Caco-2 (cell line): ENCODE measurements at regions of chr2 and their contacts with region 1.

Region 1: DNA sequence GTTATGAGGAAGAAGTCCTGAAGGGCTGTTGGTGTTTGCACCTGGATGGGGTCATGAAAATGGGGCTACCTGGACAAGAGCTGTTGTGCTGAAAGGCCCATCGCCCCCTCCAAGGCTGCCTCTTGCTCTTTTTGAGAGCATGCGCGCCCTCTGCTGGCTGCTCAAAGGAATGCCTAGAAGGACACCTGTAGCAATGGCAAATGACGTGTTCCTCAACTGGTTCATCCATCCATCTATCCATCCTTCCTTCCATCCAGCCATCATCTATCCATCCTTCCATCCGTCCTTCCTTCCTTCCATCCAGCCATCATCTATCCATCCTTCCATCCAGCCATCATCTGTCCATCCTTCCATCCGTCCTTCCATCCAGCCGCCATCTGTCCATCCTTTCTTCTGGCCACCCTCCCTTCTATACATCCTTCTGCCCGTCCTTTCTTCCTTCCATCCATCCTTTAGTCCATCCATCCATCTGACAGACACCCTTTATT is 17.2 kb upstream of the RPL31 start:
- DNase-seq: peak; percentile 80 to 82
- H3K4me3 ChIP-seq: no peak overlapping the region
- H3K4me3 Mint-ChIP-seq: no peak overlapping the region
- H3K27ac Mint-ChIP-seq: no peak overlapping the region
- H3K4me1 ChIP-seq: peaks cover 16% of the 10 kb centered on the region
- H3K4me1 Mint-ChIP-seq: peaks cover 8% of the 10 kb centered on the region
- H3K27me3 ChIP-seq: no peaks in the 10 kb centered on the region
- H3K27me3 Mint-ChIP-seq: no peaks in the 10 kb centered on the region
- CTCF ChIP-seq: peak; percentile 95 to 96

Region 2: DNA sequence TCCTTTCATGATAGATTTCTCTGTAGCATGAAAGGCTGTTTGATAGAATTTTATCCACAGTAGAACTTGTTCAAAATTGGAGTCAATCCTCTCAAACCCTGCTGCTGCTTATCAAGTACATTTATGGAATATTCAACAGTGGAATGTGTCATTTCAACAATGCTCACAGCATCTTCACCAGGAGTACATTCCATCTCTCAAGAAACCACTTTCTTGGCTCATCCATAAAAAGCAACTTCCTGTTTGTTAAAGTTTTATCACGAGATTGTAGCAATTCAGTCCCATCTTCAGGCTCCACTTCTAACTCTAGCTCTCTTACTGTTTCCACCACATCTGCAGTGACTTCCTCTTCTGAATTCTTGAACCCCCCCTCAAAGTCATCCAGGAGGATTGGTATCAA is 392.7 kb before region 1 on chr2:
- CTCF ChIA-PET with region 1: interaction called, 3 read pairs
- POLR2A ChIA-PET with region 1: no interaction called
- intact Hi-C with region 1: loop called (anchors 1 kb)
- DNase-seq: no peak
- H3K4me3 ChIP-seq: no peak overlapping the region
- H3K4me3 Mint-ChIP-seq: no peak overlapping the region
- H3K27ac Mint-ChIP-seq: no peak overlapping the region
- H3K4me1 ChIP-seq: no peaks in the 10 kb centered on the region
- H3K4me1 Mint-ChIP-seq: no peaks in the 10 kb centered on the region
- H3K27me3 ChIP-seq: no peaks in the 10 kb centered on the region
- H3K27me3 Mint-ChIP-seq: peaks cover 8% of the 10 kb centered on the region
- CTCF ChIP-seq: no peak

Region 3: DNA sequence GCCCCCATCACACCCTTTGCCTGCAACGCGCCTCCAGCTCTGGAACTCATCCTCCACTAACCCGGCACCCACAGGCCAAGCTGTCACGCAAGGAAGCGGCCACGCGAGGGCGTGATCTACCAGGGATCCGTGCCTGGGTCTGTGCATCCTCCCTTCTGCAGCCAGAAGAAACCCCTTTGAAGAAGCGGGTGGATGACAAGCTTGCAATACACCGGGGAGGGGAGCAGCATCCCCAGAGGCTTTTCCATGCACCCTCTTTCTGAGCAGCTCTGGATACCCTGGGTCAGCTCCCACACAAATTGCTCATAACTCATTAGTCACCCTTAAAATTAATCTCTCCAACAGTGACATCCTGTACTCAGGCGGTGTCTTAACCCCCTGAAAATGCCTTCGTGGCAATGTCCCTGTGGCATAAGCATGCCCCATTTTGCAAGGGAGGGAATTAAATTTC is 374.5 kb before region 1 on chr2:
- CTCF ChIA-PET with region 1: interaction called, 4 read pairs
- POLR2A ChIA-PET with region 1: no interaction called
- intact Hi-C with region 1: loop called (anchors 1 kb)
- DNase-seq: peak; percentile 74 to 79
- H3K4me3 ChIP-seq: no peak overlapping the region
- H3K4me3 Mint-ChIP-seq: no peak overlapping the region
- H3K27ac Mint-ChIP-seq: no peak overlapping the region
- H3K4me1 ChIP-seq: no peaks in the 10 kb centered on the region
- H3K4me1 Mint-ChIP-seq: no peaks in the 10 kb centered on the region
- H3K27me3 ChIP-seq: no peaks in the 10 kb centered on the region
- H3K27me3 Mint-ChIP-seq: peaks cover 12% of the 10 kb centered on the region
- CTCF ChIP-seq: peak; percentile 71 to 74

Region 4: DNA sequence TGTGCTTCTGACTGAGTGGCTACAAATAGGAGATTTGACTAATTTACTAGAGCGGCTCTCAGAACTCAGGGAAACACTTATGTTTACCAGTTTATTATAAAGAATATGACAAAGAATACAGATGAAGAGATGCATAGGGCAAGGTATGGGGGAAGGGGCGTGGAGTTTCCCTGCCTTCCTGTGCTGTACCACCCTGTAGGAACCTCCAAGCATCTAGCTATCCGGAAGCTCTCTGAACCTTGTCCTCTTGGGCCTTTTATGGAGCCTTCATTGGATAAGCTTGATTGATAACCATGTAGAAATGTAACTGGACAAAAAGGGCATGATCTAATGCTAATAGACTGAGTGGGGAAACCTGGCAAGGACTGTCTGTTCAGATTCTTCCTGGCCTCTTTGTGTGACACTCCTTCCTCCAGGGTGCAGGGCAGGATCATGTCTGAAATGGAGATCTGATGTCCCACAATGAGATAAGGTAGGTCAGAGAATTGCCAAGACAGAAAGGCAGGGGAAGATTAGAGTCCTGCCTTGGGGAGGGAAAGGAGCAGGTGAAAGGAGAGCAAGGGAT is 266.8 kb before region 1 on chr2:
- CTCF ChIA-PET with region 1: no interaction called
- POLR2A ChIA-PET with region 1: no interaction called
- intact Hi-C with region 1: loop called (anchors 5 kb)
- DNase-seq: peak; percentile 14 to 49
- H3K4me3 ChIP-seq: no peak overlapping the region
- H3K4me3 Mint-ChIP-seq: no peak overlapping the region
- H3K27ac Mint-ChIP-seq: no peak overlapping the region
- H3K4me1 ChIP-seq: peaks cover 7% of the 10 kb centered on the region; the same call in 1 of the 2 replicates
- H3K4me1 Mint-ChIP-seq: no peaks in the 10 kb centered on the region
- H3K27me3 ChIP-seq: no peaks in the 10 kb centered on the region
- H3K27me3 Mint-ChIP-seq: peaks cover 5% of the 10 kb centered on the region
- CTCF ChIP-seq: no peak

Region 5: DNA sequence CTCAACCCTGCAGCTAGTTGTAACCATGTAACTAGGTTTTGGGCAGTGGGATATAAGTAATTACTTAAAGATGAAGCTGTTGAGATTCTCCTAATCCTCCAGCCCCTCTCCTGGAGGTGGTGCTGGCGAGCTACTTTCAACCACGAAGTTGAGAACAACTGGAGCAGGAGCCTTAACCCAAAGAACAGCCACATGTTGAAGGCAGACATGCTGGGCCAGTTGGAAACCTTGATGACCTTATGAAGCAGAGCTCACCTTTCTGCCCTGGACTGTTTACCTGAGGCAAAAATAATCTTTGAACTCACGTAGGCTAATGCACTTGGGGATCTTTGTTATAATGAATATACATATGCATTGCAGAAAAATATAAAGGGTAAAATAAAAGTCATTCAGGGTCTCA is 254.6 kb before region 1 on chr2:
- CTCF ChIA-PET with region 1: interaction called, 3 read pairs
- POLR2A ChIA-PET with region 1: no interaction called
- intact Hi-C with region 1: loop called (anchors 1 kb)
- DNase-seq: peak; percentile 49 to 55
- H3K4me3 ChIP-seq: no peak overlapping the region
- H3K4me3 Mint-ChIP-seq: no peak overlapping the region
- H3K27ac Mint-ChIP-seq: no peak overlapping the region
- H3K4me1 ChIP-seq: no peaks in the 10 kb centered on the region
- H3K4me1 Mint-ChIP-seq: no peaks in the 10 kb centered on the region
- H3K27me3 ChIP-seq: no peaks in the 10 kb centered on the region
- H3K27me3 Mint-ChIP-seq: peaks cover 14% of the 10 kb centered on the region
- CTCF ChIP-seq: peak; percentile 27 to 37

Region 6: DNA sequence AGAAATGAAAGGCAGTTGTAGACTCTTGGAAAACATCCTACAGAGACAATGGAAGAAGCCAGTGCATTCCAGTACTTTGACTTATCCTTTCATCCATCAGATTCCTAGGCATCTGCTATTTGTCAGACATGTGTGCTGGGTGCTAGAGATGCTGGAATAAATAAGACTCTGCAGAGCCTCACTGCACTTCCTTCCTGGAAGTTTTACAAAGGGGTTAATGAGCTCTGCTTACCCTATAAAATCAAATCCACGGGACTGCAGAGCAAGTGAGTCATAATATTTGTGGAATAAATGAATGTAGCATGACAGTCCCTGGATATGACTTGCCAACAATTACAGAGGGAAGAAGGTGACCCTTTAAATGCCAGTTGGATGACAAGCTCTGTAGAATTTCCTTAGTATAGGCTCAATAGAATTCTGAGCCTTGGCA is 217.7 kb before region 1 on chr2:
- CTCF ChIA-PET with region 1: no interaction called
- POLR2A ChIA-PET with region 1: no interaction called
- intact Hi-C with region 1: no loop called
- DNase-seq: no peak
- H3K4me3 ChIP-seq: no peak overlapping the region
- H3K4me3 Mint-ChIP-seq: no peak overlapping the region
- H3K27ac Mint-ChIP-seq: no peak overlapping the region
- H3K4me1 ChIP-seq: no peaks in the 10 kb centered on the region
- H3K4me1 Mint-ChIP-seq: no peaks in the 10 kb centered on the region
- H3K27me3 ChIP-seq: no peaks in the 10 kb centered on the region; the same call in 1 of the 2 replicates
- H3K27me3 Mint-ChIP-seq: peaks cover 14% of the 10 kb centered on the region
- CTCF ChIP-seq: no peak

Region 7: GRCh38 chr2:100852999-100853908 is 131.7 kb before region 1 on chr2:
- CTCF ChIA-PET with region 1: no interaction called
- POLR2A ChIA-PET with region 1: no interaction called
- intact Hi-C with region 1: loop called (anchors 1 kb)
- DNase-seq: peak in 1 of 2 experiments; percentile 22
- H3K4me3 ChIP-seq: no peak overlapping the region
- H3K4me3 Mint-ChIP-seq: no peak overlapping the region
- H3K27ac Mint-ChIP-seq: no peak overlapping the region
- H3K4me1 ChIP-seq: no peaks in the 10 kb centered on the region
- H3K4me1 Mint-ChIP-seq: no peaks in the 10 kb centered on the region
- H3K27me3 ChIP-seq: no peaks in the 10 kb centered on the region
- H3K27me3 Mint-ChIP-seq: no peaks in the 10 kb centered on the region
- CTCF ChIP-seq: no peak

Region 8: DNA sequence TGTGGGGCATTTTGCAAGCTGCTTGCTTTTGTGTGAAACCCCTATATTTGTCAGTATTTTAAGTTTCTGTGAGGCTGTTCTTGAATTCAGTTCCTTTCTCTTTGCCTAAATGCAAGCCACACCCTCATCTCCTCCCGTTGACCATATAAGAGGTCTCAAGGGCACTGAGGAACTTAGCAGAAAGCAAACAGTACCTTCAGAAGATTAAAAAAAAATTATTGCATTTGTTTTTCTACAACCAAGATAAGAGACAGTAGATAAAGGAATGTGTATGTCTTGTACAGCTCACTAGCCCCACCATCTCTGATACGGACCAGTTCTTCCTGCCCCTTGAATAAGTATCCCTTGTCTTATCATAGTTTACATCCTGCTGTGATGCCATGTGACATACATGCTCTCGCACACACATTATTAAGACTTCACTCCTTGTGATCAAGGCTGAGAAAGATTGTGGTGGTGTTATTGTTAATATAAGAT is 100.8 kb before region 1 on chr2:
- CTCF ChIA-PET with region 1: no interaction called
- POLR2A ChIA-PET with region 1: no interaction called
- intact Hi-C with region 1: loop called (anchors 1 kb)
- DNase-seq: peak; percentile 48 to 73
- H3K4me3 ChIP-seq: no peak overlapping the region
- H3K4me3 Mint-ChIP-seq: no peak overlapping the region
- H3K27ac Mint-ChIP-seq: no peak overlapping the region
- H3K4me1 ChIP-seq: peaks cover 28% of the 10 kb centered on the region
- H3K4me1 Mint-ChIP-seq: peaks cover 25% of the 10 kb centered on the region
- H3K27me3 ChIP-seq: no peaks in the 10 kb centered on the region
- H3K27me3 Mint-ChIP-seq: no peaks in the 10 kb centered on the region
- CTCF ChIP-seq: no peak

Region 9: GRCh38 chr2:100935372-100935752 is 49.6 kb before region 1 on chr2:
- CTCF ChIA-PET with region 1: no interaction called
- POLR2A ChIA-PET with region 1: no interaction called
- intact Hi-C with region 1: no loop called
- DNase-seq: no peak
- H3K4me3 ChIP-seq: no peak overlapping the region
- H3K4me3 Mint-ChIP-seq: no peak overlapping the region
- H3K27ac Mint-ChIP-seq: no peak overlapping the region
- H3K4me1 ChIP-seq: no peaks in the 10 kb centered on the region
- H3K4me1 Mint-ChIP-seq: no peaks in the 10 kb centered on the region
- H3K27me3 ChIP-seq: no peaks in the 10 kb centered on the region; the same call in 1 of the 2 replicates
- H3K27me3 Mint-ChIP-seq: peaks cover 2% of the 10 kb centered on the region
- CTCF ChIP-seq: no peak